BJ (cell line): ENCODE measurements at regions of chr19 and their contacts with region 1.

Region 1: DNA sequence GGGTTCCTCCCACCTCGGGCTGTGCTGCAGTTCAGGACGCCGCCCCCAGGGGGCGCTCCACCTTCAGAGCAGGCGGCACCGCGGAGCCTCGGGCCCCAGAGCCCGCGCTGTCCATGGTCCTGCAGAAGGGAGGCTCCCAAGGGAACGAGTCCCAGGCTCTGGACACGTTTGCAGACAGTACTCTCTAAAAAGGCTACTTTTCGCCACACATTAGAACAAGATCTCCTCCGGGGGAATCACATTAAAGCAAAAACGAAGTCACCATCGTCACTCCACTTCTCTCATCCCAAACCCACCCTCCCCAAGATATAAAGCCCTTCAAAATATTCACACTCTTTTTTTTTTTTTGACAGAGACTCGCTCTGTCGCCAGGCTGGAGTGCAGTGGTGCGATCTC is 4.6 kb upstream of the SIGLEC10 start:
- DNase-seq: no peak
- H3K4me3 ChIP-seq: no peak overlapping the region
- H3K27me3 ChIP-seq: no peaks in the 10 kb centered on the region
- CTCF ChIP-seq: peak; percentile 99

Region 2: DNA sequence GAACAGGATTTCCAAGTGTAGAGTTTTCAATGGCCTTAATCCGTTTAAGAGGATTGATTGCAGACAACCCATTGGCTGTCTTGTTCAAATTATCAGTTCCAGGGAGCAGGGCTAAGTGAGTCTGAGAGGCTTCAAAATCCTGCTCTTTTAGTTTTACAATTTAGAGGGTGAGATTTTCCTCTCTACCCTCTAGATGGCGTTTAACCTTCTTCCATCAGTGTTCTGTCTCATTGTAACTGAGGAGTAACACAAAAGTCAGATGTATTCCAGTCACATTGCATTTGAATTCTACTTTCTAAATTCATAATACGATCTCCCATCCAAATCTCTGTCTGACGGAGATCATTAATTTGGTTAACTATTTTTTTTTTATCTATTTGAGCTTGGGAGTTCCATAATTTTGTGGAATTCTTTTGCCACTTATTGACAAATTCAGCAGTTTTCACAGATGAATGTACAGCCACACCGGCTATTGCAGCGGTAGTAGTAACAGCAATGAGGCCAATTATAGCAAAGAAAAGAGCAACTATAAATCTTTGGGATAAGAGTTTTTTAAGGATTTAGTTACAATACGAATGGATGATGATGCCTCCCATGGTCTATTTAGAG is 23.9 kb before region 1 on chr19:
- CTCF ChIA-PET with region 1: interaction called, 16 read pairs
- POLR2A ChIA-PET with region 1: no interaction called
- DNase-seq: no peak
- H3K4me3 ChIP-seq: no peak overlapping the region
- H3K27me3 ChIP-seq: no peaks in the 10 kb centered on the region
- CTCF ChIP-seq: peak; percentile 66

Region 3: DNA sequence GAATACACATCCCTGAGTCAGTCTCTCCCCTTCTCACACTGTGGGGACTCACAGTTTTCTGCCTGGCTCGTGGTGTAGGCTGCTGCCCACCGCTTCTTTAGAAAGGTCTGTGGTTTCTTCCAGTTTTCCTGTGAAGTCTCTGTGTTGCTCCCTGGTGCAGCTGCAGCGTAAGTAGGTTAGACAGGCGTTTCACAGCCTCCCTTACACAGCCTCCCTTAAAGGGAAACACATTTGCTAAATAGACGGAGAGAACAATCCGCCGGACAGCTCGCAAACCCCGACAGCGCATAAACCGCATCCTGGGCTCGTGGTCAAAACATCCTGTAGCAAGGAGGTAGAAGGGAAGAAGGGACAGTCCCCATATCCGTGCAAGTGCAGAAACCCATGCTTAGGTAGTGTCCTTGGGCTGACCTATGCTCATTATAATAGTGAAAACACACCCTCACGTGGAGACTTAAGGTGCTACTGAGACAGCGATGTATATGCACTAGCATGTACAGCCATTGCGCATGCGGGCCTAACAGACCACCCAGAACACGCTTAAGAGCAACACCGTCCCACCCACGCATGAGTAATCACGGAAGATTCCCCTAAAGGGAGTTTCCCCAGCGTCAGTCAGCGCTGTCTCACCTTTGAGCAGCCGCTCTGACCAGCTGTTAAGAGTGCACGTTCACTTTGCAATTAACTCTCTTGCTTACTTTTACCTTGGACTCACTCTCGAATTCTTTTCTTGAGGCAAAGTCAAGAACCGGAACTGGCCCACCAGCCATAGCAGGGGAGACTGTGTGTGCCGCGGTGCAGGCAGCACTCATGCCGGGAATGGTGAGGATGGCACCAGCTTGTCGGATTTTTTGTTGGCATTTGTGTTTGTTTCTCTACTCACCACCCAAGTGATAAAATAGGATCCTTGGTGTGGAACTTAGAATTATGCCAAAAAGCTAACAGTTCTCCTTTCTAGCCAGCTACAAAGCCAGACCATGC is 19.6 kb after region 1 on chr19:
- CTCF ChIA-PET with region 1: interaction called, 10 read pairs
- POLR2A ChIA-PET with region 1: no interaction called
- DNase-seq: no peak
- H3K4me3 ChIP-seq: no peak overlapping the region
- H3K27me3 ChIP-seq: no peaks in the 10 kb centered on the region
- CTCF ChIP-seq: no peak

Region 4: GRCh38 chr19:51531349-51532315 is 109.6 kb after region 1 on chr19 and contains the start of gene SIGLEC6:
- CTCF ChIA-PET with region 1: no interaction called
- POLR2A ChIA-PET with region 1: no interaction called
- DNase-seq: no peak
- H3K4me3 ChIP-seq: no peak within 1 kb of the TSS
- H3K27me3 ChIP-seq: no peaks in the 10 kb centered on the region
- CTCF ChIP-seq: no peak
- polyA plus RNA-seq, gene SIGLEC6: not detected in 2 replicates